B cell (primary cell): ENCODE measurements at regions of chr6 and their contacts with region 1.

Region 1: GRCh38 chr6:33317669-33318425 is at the start of gene ZBTB22:
- DNase-seq: peak; percentile 98
- ATAC-seq: peak; percentile 61
- H3K4me3 ChIP-seq: peak within 1 kb of the TSS; percentile 82 to 99 (median 91)
- H3K4me3 Mint-ChIP-seq: peak within 1 kb of the TSS; percentile 100
- H3K27ac ChIP-seq: peak within 1 kb of the TSS; percentile 80 to 100
- H3K27ac Mint-ChIP-seq: peak within 1 kb of the TSS; percentile 99
- H3K4me1 ChIP-seq: peaks cover 66 to 76% of the 10 kb centered on the region in 2 donors
- H3K4me1 Mint-ChIP-seq: peaks cover 82% of the 10 kb centered on the region
- H3K27me3 ChIP-seq: no peaks in the 10 kb centered on the region
- H3K27me3 Mint-ChIP-seq: no peaks in the 10 kb centered on the region
- CTCF ChIP-seq: no peak
- total RNA-seq, gene ZBTB22: 39.7 and 44.4 TPM in 2 replicates

Region 2: GRCh38 chr6:32933636-32934085 is 384.2 kb before region 1 on chr6:
- CTCF ChIA-PET with region 1: no interaction called
- POLR2A ChIA-PET with region 1: no interaction called
- intact Hi-C with region 1: no loop called
- DNase-seq: peak; percentile 82
- ATAC-seq: peak; percentile 60
- H3K4me3 ChIP-seq: no peak overlapping the region
- H3K4me3 Mint-ChIP-seq: peak overlapping the region; percentile 30
- H3K27ac ChIP-seq: peak overlapping the region; percentile 3 to 98
- H3K27ac Mint-ChIP-seq: peak overlapping the region; percentile 84
- H3K4me1 ChIP-seq: peaks cover 76 to 85% of the 10 kb centered on the region in 2 donors
- H3K4me1 Mint-ChIP-seq: peaks cover 88% of the 10 kb centered on the region
- H3K27me3 ChIP-seq: no peaks in the 10 kb centered on the region
- H3K27me3 Mint-ChIP-seq: no peaks in the 10 kb centered on the region
- CTCF ChIP-seq: peak; percentile 84

Region 3: GRCh38 chr6:33276864-33277662 is 40.8 kb before region 1 on chr6 and contains the start of gene B3GALT4:
- CTCF ChIA-PET with region 1: interaction called, 15 read pairs
- POLR2A ChIA-PET with region 1: interaction called, 24 read pairs
- intact Hi-C with region 1: no loop called
- DNase-seq: peak; percentile 88
- ATAC-seq: peak; percentile 72
- H3K4me3 ChIP-seq: peak within 1 kb of the TSS; percentile 59 to 86 (median 78)
- H3K4me3 Mint-ChIP-seq: peak within 1 kb of the TSS; percentile 92
- H3K27ac ChIP-seq: peak within 1 kb of the TSS; percentile 80 to 87
- H3K27ac Mint-ChIP-seq: peak within 1 kb of the TSS; percentile 98
- H3K4me1 ChIP-seq: peaks cover 55 to 69% of the 10 kb centered on the region in 2 donors
- H3K4me1 Mint-ChIP-seq: peaks cover 69% of the 10 kb centered on the region
- H3K27me3 ChIP-seq: no peaks in the 10 kb centered on the region
- H3K27me3 Mint-ChIP-seq: no peaks in the 10 kb centered on the region
- CTCF ChIP-seq: peak; percentile 75
- total RNA-seq, gene B3GALT4: 44.1 and 46.0 TPM in 2 replicates

Region 4: GRCh38 chr6:33299237-33299944 is 18.5 kb before region 1 on chr6:
- CTCF ChIA-PET with region 1: interaction called, 54 read pairs
- POLR2A ChIA-PET with region 1: interaction called, 21 read pairs
- intact Hi-C with region 1: loop called (anchors 1 kb)
- DNase-seq: peak; percentile 95
- ATAC-seq: peak; percentile 68
- H3K4me3 ChIP-seq: peak overlapping the region; percentile 71 to 96 (median 79)
- H3K4me3 Mint-ChIP-seq: peak overlapping the region; percentile 99
- H3K27ac ChIP-seq: peak overlapping the region; percentile 86 to 91
- H3K27ac Mint-ChIP-seq: peak overlapping the region; percentile 99
- H3K4me1 ChIP-seq: peaks cover 12 to 24% of the 10 kb centered on the region in 2 donors
- H3K4me1 Mint-ChIP-seq: peaks cover 38% of the 10 kb centered on the region
- H3K27me3 ChIP-seq: no peaks in the 10 kb centered on the region
- H3K27me3 Mint-ChIP-seq: no peaks in the 10 kb centered on the region
- CTCF ChIP-seq: peak; percentile 69

Region 5: DNA sequence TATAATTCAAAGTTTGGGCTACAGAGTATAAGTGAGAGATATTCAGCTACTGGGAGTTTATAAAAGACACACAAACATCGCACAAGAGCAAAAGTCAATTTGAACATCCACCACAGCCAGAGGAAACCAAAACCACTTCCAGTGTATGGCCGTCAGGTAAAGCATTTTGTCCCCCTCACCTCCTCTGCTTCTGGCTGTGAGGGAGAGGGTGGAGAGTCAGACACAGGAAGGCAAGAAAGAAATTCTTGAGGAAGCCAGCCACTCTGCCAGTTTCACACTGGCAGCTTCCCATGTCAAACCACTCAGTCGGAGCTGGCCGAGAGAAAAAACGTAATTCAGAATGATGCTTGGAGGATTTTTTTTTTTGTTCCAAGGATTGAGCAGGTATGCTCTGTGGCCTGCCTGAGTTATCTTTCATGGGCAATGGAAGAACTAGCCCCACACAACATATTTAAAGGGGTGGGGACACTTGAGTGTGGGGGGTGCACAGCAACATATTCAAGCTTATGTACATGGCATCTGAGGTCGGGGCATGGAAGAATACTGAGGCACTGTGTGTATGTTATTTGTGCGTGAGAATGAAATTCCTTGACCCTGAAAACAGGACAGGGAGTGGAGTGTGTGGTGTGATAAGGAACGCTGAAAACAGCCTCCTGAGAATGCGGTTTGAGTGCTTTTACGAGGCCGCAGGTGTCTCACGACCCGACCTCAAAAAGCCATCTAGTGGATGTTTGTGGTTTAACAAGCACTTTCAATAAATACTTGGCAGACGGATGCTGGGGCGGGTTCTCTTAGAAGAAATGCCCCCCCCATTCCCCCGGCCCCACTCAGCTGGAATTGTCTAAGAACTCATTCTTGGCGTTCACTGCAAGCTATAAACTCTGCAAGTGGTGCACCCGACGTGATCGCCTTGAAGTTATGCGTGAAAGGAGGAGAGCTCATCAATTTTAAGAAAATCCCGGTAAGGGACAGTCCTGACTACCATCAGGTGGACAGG is 27.2 kb after region 1 on chr6:
- CTCF ChIA-PET with region 1: interaction called, 50 read pairs
- POLR2A ChIA-PET with region 1: interaction called, 40 read pairs
- intact Hi-C with region 1: loop called (anchors 1 kb)
- DNase-seq: peak; percentile 91
- ATAC-seq: peak; percentile 31
- H3K4me3 ChIP-seq: peak overlapping the region in 4 of 5 experiments; percentile 13 to 59 (median 42)
- H3K4me3 Mint-ChIP-seq: peak overlapping the region; percentile 81
- H3K27ac ChIP-seq: peak overlapping the region; percentile 92 to 93
- H3K27ac Mint-ChIP-seq: peak overlapping the region; percentile 94
- H3K4me1 ChIP-seq: peaks cover 40 to 50% of the 10 kb centered on the region in 2 donors
- H3K4me1 Mint-ChIP-seq: peaks cover 36% of the 10 kb centered on the region
- H3K27me3 ChIP-seq: no peaks in the 10 kb centered on the region
- H3K27me3 Mint-ChIP-seq: no peaks in the 10 kb centered on the region
- CTCF ChIP-seq: peak; percentile 79

Region 6: GRCh38 chr6:33410050-33410710 is 92.3 kb after region 1 on chr6:
- CTCF ChIA-PET with region 1: no interaction called
- POLR2A ChIA-PET with region 1: interaction called, 16 read pairs
- intact Hi-C with region 1: loop called (anchors 1 kb)
- DNase-seq: peak; percentile 98
- ATAC-seq: peak; percentile 74
- H3K4me3 ChIP-seq: peak overlapping the region; percentile 63 to 91 (median 84)
- H3K4me3 Mint-ChIP-seq: peak overlapping the region; percentile 87
- H3K27ac ChIP-seq: peak overlapping the region; percentile 96 to 98
- H3K27ac Mint-ChIP-seq: peak overlapping the region; percentile 94
- H3K4me1 ChIP-seq: peaks cover 37 to 52% of the 10 kb centered on the region in 2 donors
- H3K4me1 Mint-ChIP-seq: peaks cover 47% of the 10 kb centered on the region
- H3K27me3 ChIP-seq: no peaks in the 10 kb centered on the region
- H3K27me3 Mint-ChIP-seq: no peaks in the 10 kb centered on the region
- CTCF ChIP-seq: no peak

Region 7: DNA sequence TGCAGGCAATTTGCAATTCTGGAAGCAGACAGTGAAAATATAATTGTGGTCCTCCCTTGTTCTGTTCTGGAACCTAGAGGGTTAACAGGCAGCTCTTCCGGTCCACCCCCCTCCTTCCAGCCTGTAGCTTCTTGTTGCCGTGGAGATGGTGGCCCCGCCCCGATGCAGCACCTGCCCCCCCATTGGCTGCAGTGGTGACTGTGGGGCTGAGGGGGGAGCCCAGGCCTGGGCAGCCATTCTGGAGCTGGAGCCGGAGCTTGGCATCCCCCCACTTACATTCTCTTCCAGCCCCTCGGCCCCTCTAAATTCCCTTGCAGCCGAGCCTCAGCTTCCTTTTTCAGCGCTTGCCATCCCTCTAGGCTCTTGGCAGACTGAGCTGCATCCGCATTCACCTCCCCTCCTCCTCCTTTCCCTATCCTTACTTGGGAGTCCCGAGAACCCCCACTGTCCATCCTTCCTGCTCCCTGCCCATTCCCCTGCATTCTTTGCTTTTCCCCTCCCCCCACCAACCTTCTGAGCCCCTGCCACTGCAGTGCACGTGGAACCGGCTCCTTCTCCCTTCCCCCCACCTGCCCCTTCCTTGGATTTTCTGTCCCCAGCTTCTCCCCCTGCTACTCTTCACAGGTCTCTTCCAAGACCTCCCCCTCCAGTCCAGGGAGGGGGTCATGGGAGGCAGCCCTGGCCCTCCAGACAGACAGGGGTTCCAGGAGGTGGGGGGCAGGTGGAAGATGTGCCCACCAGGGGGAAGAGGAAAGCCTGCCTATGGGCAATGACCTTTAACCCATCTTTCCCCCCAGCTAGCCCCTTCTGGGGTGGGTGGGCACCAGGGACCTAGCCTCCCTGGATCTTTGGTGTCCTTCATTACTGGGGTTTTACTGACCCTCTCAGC is 113.4 kb after region 1 on chr6:
- CTCF ChIA-PET with region 1: interaction called, 7 read pairs
- POLR2A ChIA-PET with region 1: interaction called, 10 read pairs
- intact Hi-C with region 1: loop called (anchors 5 kb)
- DNase-seq: peak; percentile 86
- ATAC-seq: peak; percentile 53
- H3K4me3 ChIP-seq: peak overlapping the region; percentile 41 to 72 (median 50)
- H3K4me3 Mint-ChIP-seq: peak overlapping the region; percentile 96
- H3K27ac ChIP-seq: peak overlapping the region; percentile 56 to 75
- H3K27ac Mint-ChIP-seq: peak overlapping the region; percentile 96
- H3K4me1 ChIP-seq: peaks cover 67 to 74% of the 10 kb centered on the region in 2 donors
- H3K4me1 Mint-ChIP-seq: peaks cover 74% of the 10 kb centered on the region
- H3K27me3 ChIP-seq: no peaks in the 10 kb centered on the region
- H3K27me3 Mint-ChIP-seq: no peaks in the 10 kb centered on the region
- CTCF ChIP-seq: no peak